Psoas muscle (tissue), 8 donors: ENCODE measurements at regions of chr4 and their contacts with region 1.

Region 1: GRCh38 chr4:173334085-173334772 is at the start of gene HMGB2:
- DNase-seq: peak; percentile 100
- ATAC-seq: peak; percentile 96 to 100 (median 99)
- H3K4me3 ChIP-seq: peak within 1 kb of the TSS; percentile 92
- H3K27ac ChIP-seq: peak within 1 kb of the TSS; percentile 98
- H3K4me1 ChIP-seq: peaks cover 12% of the 10 kb centered on the region
- H3K27me3 ChIP-seq: no peaks in the 10 kb centered on the region
- CTCF ChIP-seq: no peak
- total RNA-seq, gene HMGB2: 14.9 to 27.2 (median 19.6) TPM

Region 2: DNA sequence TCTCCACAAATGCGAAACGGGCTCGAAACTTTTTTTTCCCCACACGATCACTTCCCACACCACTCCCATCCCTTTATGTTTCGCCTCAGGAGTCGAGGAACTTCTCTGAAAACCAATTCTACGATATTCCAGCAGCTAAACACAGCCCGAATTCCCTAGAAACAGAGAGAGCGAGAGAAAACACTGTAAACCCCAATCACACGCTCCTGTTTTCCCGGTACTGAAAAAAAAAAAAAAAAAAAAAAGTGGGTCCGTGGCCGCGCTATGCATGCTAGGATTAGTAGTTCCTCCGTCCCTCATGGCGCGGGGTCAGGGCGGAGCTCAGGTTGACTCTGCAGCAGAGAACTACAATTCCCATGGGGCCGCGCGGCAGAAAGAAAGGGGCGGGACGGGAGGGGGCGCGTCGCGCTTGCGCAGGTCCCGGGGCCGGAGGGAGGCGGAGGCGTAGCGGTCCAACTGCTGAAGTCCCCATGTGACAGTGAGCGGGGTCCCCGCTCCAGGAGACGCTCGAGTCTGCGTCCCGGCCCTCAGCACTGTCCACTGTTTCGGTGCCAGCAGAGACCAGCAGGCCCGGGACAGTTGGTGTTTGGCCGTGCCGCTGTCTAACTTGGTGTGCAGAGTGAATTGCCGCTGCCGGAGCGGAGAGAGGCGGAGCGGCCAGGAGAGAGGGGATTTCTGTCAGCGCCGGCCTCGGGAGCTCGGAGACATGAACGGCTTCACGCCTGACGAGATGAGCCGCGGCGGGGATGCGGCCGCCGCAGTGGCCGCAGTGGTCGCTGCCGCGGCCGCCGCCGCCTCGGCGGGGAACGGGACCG is 36.5 kb after region 1 on chr4 and contains the start of gene SAP30:
- intact Hi-C with region 1: loop called (anchors 1 to 2 kb)
- DNase-seq: peak; percentile 98 to 99
- ATAC-seq: peak; percentile 95 to 98 (median 97)
- H3K4me3 ChIP-seq: peak within 1 kb of the TSS; percentile 84
- H3K27ac ChIP-seq: peak within 1 kb of the TSS; percentile 92
- H3K4me1 ChIP-seq: peaks cover 16% of the 10 kb centered on the region
- H3K27me3 ChIP-seq: no peaks in the 10 kb centered on the region
- CTCF ChIP-seq: no peak
- total RNA-seq, gene SAP30: 3.5 to 8.4 (median 6.4) TPM